Naive thymus-derived CD4-positive, alpha-beta T cell (primary cell): ENCODE measurements at regions of chr18 and their contacts with region 1.

Region 1: DNA sequence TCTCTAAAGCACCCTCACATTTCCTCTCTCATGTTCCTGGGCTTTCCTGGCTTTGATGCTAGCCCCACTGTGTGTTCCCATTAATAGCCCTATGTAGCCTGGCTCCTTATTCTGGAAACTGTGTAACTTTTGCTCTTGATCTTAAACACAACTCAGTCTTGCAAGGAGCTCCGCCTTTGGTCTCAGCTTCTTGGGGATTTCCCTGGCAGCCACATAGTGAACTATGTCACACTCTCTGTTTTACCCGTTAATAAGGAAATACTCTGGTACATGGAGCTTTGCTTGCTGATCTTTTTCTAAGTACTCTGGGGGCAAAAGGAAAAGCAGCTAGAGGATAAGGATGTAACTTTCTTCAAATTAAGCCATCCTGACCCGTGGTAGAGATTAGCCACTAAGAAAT is 259.3 kb downstream of the NEDD4L start:
- DNase-seq: peak in 6 of 9 donors; percentile 21 to 48 (median 30)
- ATAC-seq: peak; percentile 80
- H3K4me3 ChIP-seq: no peak overlapping the region
- H3K4me3 Mint-ChIP-seq: peak overlapping the region; percentile 23 to 77 (median 64)
- H3K27ac ChIP-seq: no peak overlapping the region
- H3K27ac Mint-ChIP-seq: peak overlapping the region; percentile 12 to 84 (median 70)
- H3K4me1 ChIP-seq: peaks cover 0 to 23% of the 10 kb centered on the region in 2 donors
- H3K4me1 Mint-ChIP-seq: peaks cover 8 to 31% (median 22%) of the 10 kb centered on the region in 7 donors
- H3K27me3 ChIP-seq: no peaks in the 10 kb centered on the region
- H3K27me3 Mint-ChIP-seq: peaks cover 0 to 33% (median 0%) of the 10 kb centered on the region in 5 donors

Region 2: DNA sequence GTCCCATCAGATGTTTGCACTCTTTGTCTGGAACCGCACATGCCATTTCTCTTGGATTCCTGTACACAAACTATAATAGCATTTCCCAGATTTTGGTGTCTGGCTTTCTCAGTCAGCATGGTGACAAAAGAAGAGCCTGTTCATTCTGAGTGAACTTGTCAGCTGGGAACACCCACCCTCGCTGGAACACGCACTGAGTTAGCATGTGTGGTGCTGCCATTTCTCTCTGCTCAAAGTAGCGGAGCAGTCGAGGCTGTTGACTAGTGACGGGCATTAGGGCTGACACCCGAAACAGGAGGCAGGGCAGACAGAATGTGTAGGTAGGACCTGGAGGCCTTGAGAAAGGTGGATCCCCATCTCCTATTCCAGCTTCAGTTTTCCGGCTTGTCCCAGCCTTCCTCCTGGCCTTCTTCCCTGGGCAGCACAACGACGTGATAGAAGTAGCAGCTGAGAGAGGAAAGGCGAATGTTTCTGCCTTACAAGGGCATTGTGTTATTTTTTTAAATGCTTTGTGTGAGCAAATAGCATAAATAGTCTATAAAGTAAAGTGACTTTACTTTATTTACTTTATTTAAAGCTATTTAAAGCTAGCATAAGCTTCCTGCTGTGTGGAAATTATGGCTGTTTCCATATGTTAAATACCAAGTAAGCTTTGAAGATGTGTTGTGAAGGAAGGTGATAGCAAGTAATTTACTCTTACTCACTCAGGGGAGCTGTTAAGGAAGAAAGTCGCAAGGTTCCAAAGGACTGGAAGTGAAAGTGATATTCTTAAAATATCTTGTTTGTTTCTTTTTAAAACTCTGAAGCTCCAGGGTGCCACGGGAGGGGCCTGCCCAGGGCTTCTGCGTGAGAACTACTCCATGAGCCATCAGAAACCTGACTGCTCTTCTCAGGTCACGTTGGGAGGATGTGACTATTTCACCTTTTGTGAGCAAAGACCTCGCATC is 13.3 kb after region 1 on chr18:
- CTCF ChIA-PET with region 1: interaction called, 18 read pairs
- POLR2A ChIA-PET with region 1: interaction called, 3 read pairs
- intact Hi-C with region 1: loop called in 1 of 2 experiments (anchors 1 kb)
- DNase-seq: peak in 6 of 9 donors; percentile 4 to 32 (median 25)
- ATAC-seq: no peak
- H3K4me3 ChIP-seq: no peak overlapping the region
- H3K4me3 Mint-ChIP-seq: peak overlapping the region in 2 of 10 donors; percentile 12 to 26
- H3K27ac ChIP-seq: peak overlapping the region; percentile 29
- H3K27ac Mint-ChIP-seq: peak overlapping the region in 7 of 9 donors; percentile 24 to 87 (median 49)
- H3K4me1 ChIP-seq: peaks cover 0 to 29% of the 10 kb centered on the region in 2 donors
- H3K4me1 Mint-ChIP-seq: peaks cover 11 to 69% (median 50%) of the 10 kb centered on the region in 7 donors
- H3K27me3 ChIP-seq: no peaks in the 10 kb centered on the region
- H3K27me3 Mint-ChIP-seq: peaks cover 0 to 11% (median 0%) of the 10 kb centered on the region in 5 donors

Region 3: GRCh38 chr18:58438161-58438957 is 135.0 kb after region 1 on chr18:
- CTCF ChIA-PET with region 1: no interaction called
- POLR2A ChIA-PET with region 1: no interaction called
- intact Hi-C with region 1: no loop called
- DNase-seq: peak in 3 of 9 donors; percentile 3 to 29 (median 23)
- ATAC-seq: no peak
- H3K4me3 ChIP-seq: peak overlapping the region; percentile 48
- H3K4me3 Mint-ChIP-seq: peak overlapping the region; percentile 60 to 90 (median 80)
- H3K27ac ChIP-seq: no peak overlapping the region
- H3K27ac Mint-ChIP-seq: peak overlapping the region; percentile 1 to 91 (median 63)
- H3K4me1 ChIP-seq: peaks cover 0 to 16% of the 10 kb centered on the region in 2 donors
- H3K4me1 Mint-ChIP-seq: peaks cover 13 to 22% (median 17%) of the 10 kb centered on the region in 7 donors
- H3K27me3 ChIP-seq: no peaks in the 10 kb centered on the region
- H3K27me3 Mint-ChIP-seq: peaks cover 0 to 13% (median 0%) of the 10 kb centered on the region in 5 donors